Endothelial cell of umbilical vein (primary cell): ENCODE measurements at regions of chr4 and their contacts with region 1.

Region 1: GRCh38 chr4:107824353-107825071 is at the start of gene SGMS2:
- DNase-seq: peak; percentile 91
- H3K4me3 ChIP-seq: peak within 1 kb of the TSS; percentile 83 to 94 (median 91)
- H3K27ac ChIP-seq: peak within 1 kb of the TSS; percentile 86
- H3K4me1 ChIP-seq: peaks cover 17% of the 10 kb centered on the region
- H3K27me3 ChIP-seq: no peaks in the 10 kb centered on the region
- CTCF ChIP-seq: no peak
- POLR2A ChIP-seq: peak; percentile 33
- total RNA-seq, gene SGMS2: 33.0 and 35.9 TPM in 2 replicates

Region 2: DNA sequence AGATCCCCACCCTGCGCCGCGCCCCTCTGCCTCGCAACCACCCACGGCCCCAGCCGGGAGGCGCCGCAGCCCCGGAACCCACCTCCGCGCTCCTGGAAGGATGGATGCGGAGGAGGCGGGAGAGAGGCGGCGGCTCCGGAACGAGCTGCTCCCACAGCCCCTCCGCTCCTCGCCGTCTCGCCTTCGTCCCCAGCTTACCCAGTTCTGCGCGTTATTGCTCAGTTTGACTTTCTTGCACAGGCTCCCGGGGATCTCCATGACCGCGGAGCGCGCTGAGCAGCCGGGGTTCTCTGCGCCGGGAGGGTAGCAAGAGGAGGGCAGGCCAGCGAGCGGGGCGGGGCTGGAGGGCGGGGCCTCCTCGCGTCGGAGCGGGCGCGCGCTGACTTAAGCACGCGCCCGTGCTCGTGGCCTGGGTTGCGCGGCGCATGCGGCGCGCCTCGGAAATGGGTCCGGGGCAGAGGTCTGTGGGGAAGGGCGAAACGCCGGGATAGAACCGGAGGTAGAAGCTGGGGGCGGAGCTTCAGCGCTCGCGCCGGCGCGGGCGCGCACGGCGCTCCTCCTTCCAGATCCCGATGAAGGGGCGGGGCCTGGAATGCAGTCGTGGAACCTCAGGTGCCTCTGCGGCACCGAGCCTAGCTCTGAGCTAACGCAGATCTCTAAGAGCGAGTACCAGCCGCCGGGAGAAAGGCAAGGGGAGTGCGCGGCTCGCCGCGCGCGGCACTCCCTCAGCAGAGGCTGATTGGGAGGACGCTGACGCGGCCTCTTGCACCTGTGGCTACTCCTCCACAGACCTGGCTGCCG is 104.4 kb before region 1 on chr4 and contains the start of gene PAPSS1:
- CTCF ChIA-PET with region 1: no interaction called
- POLR2A ChIA-PET with region 1: no interaction called
- dilution Hi-C with region 1: no loop called
- intact Hi-C with region 1: loop called (anchors 1 kb)
- DNase-seq: peak; percentile 99
- H3K4me3 ChIP-seq: peak within 1 kb of the TSS; percentile 56 to 92 (median 84)
- H3K27ac ChIP-seq: peak within 1 kb of the TSS; percentile 42
- H3K4me1 ChIP-seq: peaks cover 10% of the 10 kb centered on the region
- H3K27me3 ChIP-seq: no peaks in the 10 kb centered on the region
- CTCF ChIP-seq: no peak
- POLR2A ChIP-seq: peak; percentile 84
- total RNA-seq, gene PAPSS1: 69.6 and 72.0 TPM in 2 replicates

Region 3: GRCh38 chr4:107853444-107854355 is 29.2 kb after region 1 on chr4:
- CTCF ChIA-PET with region 1: interaction called, 16 read pairs
- POLR2A ChIA-PET with region 1: interaction called, 5 read pairs
- dilution Hi-C with region 1: no loop called
- intact Hi-C with region 1: loop called (anchors 1 kb)
- DNase-seq: peak; percentile 71
- H3K4me3 ChIP-seq: peak overlapping the region in 1 of 3 experiments; percentile 37
- H3K27ac ChIP-seq: peak overlapping the region; percentile 67
- H3K4me1 ChIP-seq: peaks cover 21% of the 10 kb centered on the region
- H3K27me3 ChIP-seq: no peaks in the 10 kb centered on the region
- CTCF ChIP-seq: no peak
- POLR2A ChIP-seq: no peak

Region 4: GRCh38 chr4:107870916-107871786 is 46.6 kb after region 1 on chr4:
- CTCF ChIA-PET with region 1: interaction called, 5 read pairs
- POLR2A ChIA-PET with region 1: no interaction called
- dilution Hi-C with region 1: no loop called
- intact Hi-C with region 1: loop called (anchors 2 kb)
- DNase-seq: peak; percentile 74
- H3K4me3 ChIP-seq: peak overlapping the region in 2 of 3 experiments; percentile 16 to 25
- H3K27ac ChIP-seq: peak overlapping the region; percentile 32
- H3K4me1 ChIP-seq: peaks cover 32% of the 10 kb centered on the region
- H3K27me3 ChIP-seq: no peaks in the 10 kb centered on the region
- CTCF ChIP-seq: no peak
- POLR2A ChIP-seq: no peak

Region 5: DNA sequence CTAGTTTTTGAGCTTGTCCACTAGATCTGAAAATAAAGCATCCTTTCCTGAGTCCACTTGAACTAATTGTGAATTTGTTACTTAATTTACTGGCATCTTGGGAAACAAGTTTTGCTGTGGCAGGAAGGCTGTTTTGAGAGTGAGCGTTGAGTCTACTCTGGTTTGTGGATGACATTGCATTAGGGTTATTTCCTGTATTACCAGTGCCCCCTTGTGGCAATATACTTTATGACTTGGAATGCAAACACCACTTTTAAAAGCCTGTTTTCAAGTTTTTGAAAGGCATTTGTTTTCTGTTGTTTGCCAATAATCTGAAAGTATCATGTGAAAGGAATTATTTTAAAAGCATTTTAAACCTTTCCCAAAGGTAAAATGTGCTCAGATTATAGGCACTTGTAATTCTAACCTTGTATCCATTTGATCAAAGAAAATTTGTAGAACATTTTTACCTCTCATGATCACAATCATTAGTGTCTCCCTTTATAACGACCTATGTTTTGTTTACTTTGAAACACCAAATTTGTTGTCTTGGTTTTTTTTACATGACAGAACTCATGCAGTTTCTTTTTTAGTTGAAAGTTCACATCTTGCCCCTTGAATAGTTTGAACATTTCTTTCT is 88.9 kb after region 1 on chr4:
- CTCF ChIA-PET with region 1: interaction called, 11 read pairs
- POLR2A ChIA-PET with region 1: no interaction called
- dilution Hi-C with region 1: no loop called
- intact Hi-C with region 1: loop called (anchors 1 kb)
- DNase-seq: peak; percentile 80
- H3K4me3 ChIP-seq: no peak overlapping the region
- H3K27ac ChIP-seq: no peak overlapping the region
- H3K4me1 ChIP-seq: no peaks in the 10 kb centered on the region
- H3K27me3 ChIP-seq: no peaks in the 10 kb centered on the region
- CTCF ChIP-seq: peak; percentile 45 to 49
- POLR2A ChIP-seq: no peak

Region 6: GRCh38 chr4:107989537-107990386 is 165.2 kb after region 1 on chr4 and contains the start of gene HADH:
- CTCF ChIA-PET with region 1: no interaction called
- POLR2A ChIA-PET with region 1: no interaction called
- dilution Hi-C with region 1: no loop called
- intact Hi-C with region 1: loop called (anchors 5 kb)
- DNase-seq: peak; percentile 93
- H3K4me3 ChIP-seq: peak within 1 kb of the TSS; percentile 52 to 66 (median 64)
- H3K27ac ChIP-seq: peak within 1 kb of the TSS; percentile 26
- H3K4me1 ChIP-seq: peaks cover 6% of the 10 kb centered on the region
- H3K27me3 ChIP-seq: no peaks in the 10 kb centered on the region
- CTCF ChIP-seq: no peak
- POLR2A ChIP-seq: peak; percentile 45
- total RNA-seq, gene HADH: 20.3 and 22.1 TPM in 2 replicates